ENCODE measurements at regions of chr10 and their contacts with region 1.

Region 1: DNA sequence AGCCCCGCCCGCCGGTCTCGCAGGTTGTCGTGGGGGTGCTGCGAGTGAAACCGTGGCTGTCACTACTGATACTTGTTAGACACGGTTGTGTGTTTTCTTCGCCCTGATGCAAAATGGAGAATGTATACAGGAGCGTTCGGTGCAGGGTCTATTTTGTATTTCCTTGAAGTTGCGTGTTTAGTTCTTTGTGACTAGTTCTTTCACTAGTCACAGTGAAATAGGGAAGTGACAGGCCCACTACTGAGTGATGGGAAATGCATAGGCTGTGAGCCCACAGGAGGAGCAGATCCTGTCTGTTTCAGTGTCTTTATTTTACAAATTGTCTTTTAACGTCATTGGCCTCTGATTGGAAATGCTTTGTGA is 675 bp downstream of the ABRAXAS2 start:
- DNase-seq: no peak
- H3K4me3 ChIP-seq: peak overlapping the region; percentile 65
- H3K4me3 Mint-ChIP-seq: peak overlapping the region; percentile 95
- H3K27ac Mint-ChIP-seq: peak overlapping the region; percentile 86
- H3K4me1 ChIP-seq: no peaks in the 10 kb centered on the region; the same call in 1 of the 2 replicates
- H3K4me1 Mint-ChIP-seq: peaks cover 12% of the 10 kb centered on the region
- H3K27me3 ChIP-seq: no peaks in the 10 kb centered on the region
- H3K27me3 Mint-ChIP-seq: no peaks in the 10 kb centered on the region
- CTCF ChIP-seq: no peak

Region 2: GRCh38 chr10:124461438-124462347 is 340.6 kb before region 1 on chr10 and contains the start of gene LHPP:
- CTCF ChIA-PET with region 1: no interaction called
- POLR2A ChIA-PET with region 1: no interaction called
- intact Hi-C with region 1: no loop called
- DNase-seq: peak; percentile 82 to 89
- H3K4me3 ChIP-seq: peak within 1 kb of the TSS; percentile 76
- H3K4me3 Mint-ChIP-seq: peak within 1 kb of the TSS; percentile 67
- H3K27ac Mint-ChIP-seq: peak within 1 kb of the TSS; percentile 76
- H3K4me1 ChIP-seq: peaks cover 29% of the 10 kb centered on the region
- H3K4me1 Mint-ChIP-seq: peaks cover 37% of the 10 kb centered on the region
- H3K27me3 ChIP-seq: no peaks in the 10 kb centered on the region
- H3K27me3 Mint-ChIP-seq: no peaks in the 10 kb centered on the region
- CTCF ChIP-seq: peak; percentile 23 to 47
- total RNA-seq, gene LHPP: 10.5 and 15.9 TPM in 2 replicates

Region 3: DNA sequence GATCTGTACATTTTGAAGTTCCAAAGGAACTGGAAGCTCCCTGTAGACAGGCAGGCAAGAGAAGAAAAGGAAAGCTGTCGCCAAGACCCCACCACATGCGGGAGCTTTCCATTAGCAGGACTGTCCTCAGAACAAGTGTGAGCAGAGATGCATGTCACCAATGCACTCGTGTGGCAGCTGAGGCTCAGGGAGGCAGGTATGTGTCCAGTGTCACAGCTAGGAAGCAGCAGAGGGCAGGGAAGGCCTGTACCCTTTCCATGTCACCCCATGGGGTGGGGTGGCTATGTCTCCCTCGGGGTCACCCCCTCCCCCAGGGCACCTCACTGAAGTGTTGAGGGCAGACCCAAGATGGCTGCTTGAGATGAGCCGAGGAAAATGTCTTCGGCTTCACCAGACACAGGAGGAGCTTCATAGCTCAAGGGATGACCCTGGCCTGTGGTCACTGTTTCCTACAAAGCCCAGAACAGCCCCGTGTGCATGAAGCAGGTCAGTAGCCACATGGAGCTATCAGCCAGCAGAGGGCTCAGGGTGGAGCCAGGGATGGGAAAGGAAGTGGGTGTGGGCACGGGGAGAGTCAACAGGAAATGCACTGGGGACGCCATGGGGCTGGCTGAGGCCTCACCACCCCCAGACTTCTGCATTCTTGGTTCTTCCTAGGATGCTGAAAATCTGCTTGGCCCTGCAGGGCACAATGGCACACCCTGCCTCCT is 154.7 kb before region 1 on chr10:
- CTCF ChIA-PET with region 1: no interaction called
- POLR2A ChIA-PET with region 1: no interaction called
- intact Hi-C with region 1: no loop called
- DNase-seq: peak in 1 of 2 experiments; percentile 12
- H3K4me3 ChIP-seq: no peak overlapping the region
- H3K4me3 Mint-ChIP-seq: no peak overlapping the region
- H3K27ac Mint-ChIP-seq: no peak overlapping the region
- H3K4me1 ChIP-seq: no peaks in the 10 kb centered on the region; the same call in 1 of the 2 replicates
- H3K4me1 Mint-ChIP-seq: no peaks in the 10 kb centered on the region
- H3K27me3 ChIP-seq: no peaks in the 10 kb centered on the region
- H3K27me3 Mint-ChIP-seq: no peaks in the 10 kb centered on the region
- CTCF ChIP-seq: peak in 1 of 2 experiments; percentile 16

Region 4: GRCh38 chr10:124791378-124792348 is 10.6 kb before region 1 on chr10 and contains the start of gene EEF1AKMT2:
- CTCF ChIA-PET with region 1: interaction called, 5 read pairs
- POLR2A ChIA-PET with region 1: interaction called, 14 read pairs
- intact Hi-C with region 1: no loop called
- DNase-seq: peak; percentile 90 to 94
- H3K4me3 ChIP-seq: peak within 1 kb of the TSS; percentile 95
- H3K4me3 Mint-ChIP-seq: peak within 1 kb of the TSS; percentile 93
- H3K27ac Mint-ChIP-seq: peak within 1 kb of the TSS; percentile 86
- H3K4me1 ChIP-seq: peaks cover 7% of the 10 kb centered on the region; the same call in 1 of the 2 replicates
- H3K4me1 Mint-ChIP-seq: peaks cover 8% of the 10 kb centered on the region
- H3K27me3 ChIP-seq: no peaks in the 10 kb centered on the region
- H3K27me3 Mint-ChIP-seq: no peaks in the 10 kb centered on the region
- CTCF ChIP-seq: peak; percentile 12 to 20
- total RNA-seq, gene EEF1AKMT2: 28.1 and 29.9 TPM in 2 replicates

Region 5: GRCh38 chr10:124949543-124949942 is 147.2 kb after region 1 on chr10:
- CTCF ChIA-PET with region 1: no interaction called
- POLR2A ChIA-PET with region 1: no interaction called
- intact Hi-C with region 1: no loop called
- DNase-seq: peak in 1 of 2 experiments; percentile 16
- H3K4me3 ChIP-seq: no peak overlapping the region
- H3K4me3 Mint-ChIP-seq: no peak overlapping the region
- H3K27ac Mint-ChIP-seq: no peak overlapping the region
- H3K4me1 ChIP-seq: 0 out of 2 replicates have a peak, but pooled peaks cover 5% of the 10 kb centered on the region
- H3K4me1 Mint-ChIP-seq: peaks cover 7% of the 10 kb centered on the region
- H3K27me3 ChIP-seq: no peaks in the 10 kb centered on the region
- H3K27me3 Mint-ChIP-seq: no peaks in the 10 kb centered on the region
- CTCF ChIP-seq: no peak

Measured in Caco-2 (cell line).